Naive thymus-derived CD8-positive, alpha-beta T cell (primary cell): ENCODE measurements at regions of chr2 and their contacts with region 1.

Region 1: DNA sequence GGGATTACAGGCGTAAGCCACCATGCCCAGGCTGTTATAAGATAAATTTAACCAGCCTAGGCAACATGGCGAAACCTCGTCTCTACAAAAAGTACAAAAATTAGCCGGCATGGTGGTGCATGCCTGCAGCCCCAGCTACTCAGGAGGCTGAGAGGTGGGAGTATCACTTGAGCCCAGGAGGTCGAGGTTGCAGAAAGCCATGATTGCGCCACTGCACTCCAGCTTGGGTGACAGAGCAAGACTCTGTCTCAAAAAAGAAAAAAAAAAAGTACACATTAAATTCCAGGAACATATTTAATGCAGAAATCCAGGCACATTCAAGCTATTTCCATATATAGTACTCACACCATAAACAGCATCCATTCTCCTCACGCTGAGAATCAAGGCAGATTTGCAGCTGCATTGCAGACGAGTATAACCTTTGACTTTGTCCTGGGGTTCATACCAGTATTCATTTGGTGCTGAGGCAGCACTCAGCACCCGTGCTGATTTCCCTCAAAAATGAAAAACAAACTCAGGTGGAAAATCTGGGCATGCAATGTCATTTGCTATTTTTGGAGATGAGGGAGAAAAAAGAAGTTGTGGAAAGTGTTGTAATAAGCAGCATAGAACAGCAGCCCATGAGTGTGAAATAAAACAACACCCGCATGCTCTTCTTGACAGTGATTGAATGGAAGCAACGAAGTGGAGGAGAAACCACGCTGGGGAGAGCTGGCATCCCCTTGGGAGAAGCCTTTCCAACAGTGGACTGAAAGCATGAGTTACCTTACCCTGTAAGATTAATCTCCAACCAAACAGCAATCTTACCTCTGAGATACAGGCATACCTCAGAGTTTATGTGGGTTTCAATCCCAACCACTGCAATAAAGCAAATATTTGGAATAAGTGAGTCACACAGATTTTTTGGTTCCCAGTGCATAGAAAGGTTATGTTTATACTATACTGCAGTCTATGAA is 46.8 kb upstream of the ANXA4 start:
- DNase-seq: no peak
- ATAC-seq: no peak
- H3K4me3 Mint-ChIP-seq: peak overlapping the region in 9 of 10 donors; percentile 39 to 72 (median 55)
- H3K27ac Mint-ChIP-seq: peak overlapping the region; percentile 71 to 98 (median 88)
- H3K4me1 Mint-ChIP-seq: peaks cover 54 to 95% (median 92%) of the 10 kb centered on the region in 4 donors
- H3K27me3 Mint-ChIP-seq: no peaks in the 10 kb centered on the region

Region 2: DNA sequence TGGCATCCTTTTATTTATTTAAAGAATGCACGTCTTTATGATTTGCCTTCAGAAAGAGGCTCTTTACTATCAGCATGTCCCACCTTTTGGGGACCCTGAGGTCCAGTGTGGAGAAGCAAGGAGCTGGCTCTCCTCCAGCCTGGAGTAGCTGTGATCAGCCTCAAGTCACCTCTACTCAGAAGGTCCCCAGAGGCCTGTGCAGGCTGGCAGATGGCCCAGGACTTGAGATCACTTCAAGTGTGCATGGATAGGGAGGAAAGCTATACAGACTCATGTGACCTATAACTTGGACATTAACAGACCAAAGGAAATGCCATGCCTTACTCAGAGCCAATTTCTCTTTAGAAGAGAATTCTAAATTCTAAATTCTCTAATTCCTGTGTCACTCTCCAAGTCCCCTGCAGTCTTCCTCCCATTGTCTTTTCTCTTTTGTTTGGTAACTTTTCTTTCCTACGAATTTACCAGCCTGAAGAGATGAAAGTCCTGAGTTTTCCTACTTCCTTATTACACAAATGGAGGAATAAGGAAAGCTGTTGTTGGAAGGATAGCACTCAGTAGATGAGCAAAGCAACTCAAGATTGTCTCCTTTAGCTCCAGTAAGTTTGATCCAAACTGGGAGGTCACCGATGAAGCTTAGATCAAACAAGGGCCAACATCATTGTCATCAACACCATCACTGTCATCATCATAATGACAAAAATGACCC is 472.1 kb before region 1 on chr2:
- POLR2A ChIA-PET with region 1: no interaction called
- DNase-seq: no peak
- ATAC-seq: no peak
- H3K4me3 Mint-ChIP-seq: no peak overlapping the region
- H3K27ac Mint-ChIP-seq: no peak overlapping the region
- H3K4me1 Mint-ChIP-seq: no peaks in the 10 kb centered on the region
- H3K27me3 Mint-ChIP-seq: peaks cover 0 to 20% (median 6%) of the 10 kb centered on the region in 5 donors

Region 3: DNA sequence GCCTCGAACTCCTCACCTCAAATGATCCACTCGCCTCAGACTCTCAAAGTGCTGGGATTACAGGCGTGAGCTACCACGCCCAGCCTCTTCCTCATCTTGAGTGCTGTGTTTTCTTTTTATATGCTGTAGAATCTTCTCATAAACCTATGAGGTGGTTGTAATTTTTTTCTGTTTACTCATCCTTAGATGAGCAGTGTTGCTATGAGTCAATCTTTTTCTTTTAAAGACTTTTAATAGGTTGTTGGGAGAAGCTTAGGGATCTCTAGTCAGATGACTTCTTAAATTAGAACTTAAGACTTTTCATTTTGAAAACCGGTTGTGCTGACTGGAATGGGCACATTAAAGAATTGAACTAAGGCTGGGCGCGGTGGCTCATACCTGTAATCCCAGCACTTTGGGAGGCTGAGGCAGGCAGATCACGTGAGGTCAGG is 42.9 kb before region 1 on chr2:
- POLR2A ChIA-PET with region 1: interaction called, 214 read pairs
- DNase-seq: no peak
- ATAC-seq: no peak
- H3K4me3 Mint-ChIP-seq: peak overlapping the region in 8 of 10 donors; percentile 15 to 81 (median 53)
- H3K27ac Mint-ChIP-seq: peak overlapping the region in 8 of 10 donors; percentile 32 to 91 (median 72)
- H3K4me1 Mint-ChIP-seq: peaks cover 23 to 65% (median 59%) of the 10 kb centered on the region in 4 donors
- H3K27me3 Mint-ChIP-seq: peaks cover 0 to 6% (median 0%) of the 10 kb centered on the region in 5 donors

Region 4: GRCh38 chr2:69669666-69670065 is 25.5 kb before region 1 on chr2:
- POLR2A ChIA-PET with region 1: no interaction called
- DNase-seq: no peak
- ATAC-seq: no peak
- H3K4me3 Mint-ChIP-seq: no peak overlapping the region
- H3K27ac Mint-ChIP-seq: no peak overlapping the region
- H3K4me1 Mint-ChIP-seq: peaks cover 8 to 20% (median 16%) of the 10 kb centered on the region in 4 donors
- H3K27me3 Mint-ChIP-seq: no peaks in the 10 kb centered on the region

Region 5: DNA sequence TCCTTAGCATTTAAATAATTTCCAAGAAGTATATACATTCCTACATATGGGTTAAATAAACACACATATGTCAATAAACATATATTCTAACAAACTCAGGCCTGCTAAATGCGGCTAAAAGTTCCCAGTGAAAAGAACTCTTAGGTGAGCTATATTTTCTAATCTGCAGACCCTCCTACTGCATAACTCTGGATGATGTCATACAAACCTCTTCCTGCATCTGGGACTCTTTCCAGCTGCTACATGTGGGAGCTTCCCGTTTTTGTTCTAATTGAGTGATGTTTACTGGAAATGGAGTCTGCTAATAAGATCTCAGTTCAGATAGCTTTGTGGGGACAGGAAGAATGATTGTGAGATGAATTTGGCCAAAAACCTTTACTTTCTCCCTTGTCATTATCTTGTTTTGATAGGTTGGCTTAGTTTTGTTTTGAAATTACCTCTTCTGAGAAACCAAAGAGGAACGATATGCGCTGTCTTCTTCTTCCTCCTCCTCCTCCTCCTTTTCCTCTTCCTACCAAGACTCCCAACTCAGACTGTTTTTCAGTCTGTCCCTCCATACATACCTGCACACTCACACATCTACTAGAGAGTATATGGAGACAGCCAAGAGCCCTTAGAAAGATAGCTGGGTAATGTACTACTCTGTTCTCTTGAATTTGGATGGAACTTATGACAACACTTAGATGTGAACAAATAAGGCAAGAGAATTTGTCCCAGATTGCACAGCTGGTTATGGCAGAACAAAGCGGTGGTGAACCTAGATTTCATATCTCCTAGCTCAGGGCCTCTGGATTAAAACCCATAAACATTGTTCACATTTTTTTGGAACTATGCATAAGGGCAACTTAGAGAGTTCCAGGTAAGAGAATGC is 11.8 kb before region 1 on chr2:
- POLR2A ChIA-PET with region 1: interaction called, 24 read pairs
- DNase-seq: no peak
- ATAC-seq: peak; percentile 40 to 47
- H3K4me3 Mint-ChIP-seq: peak overlapping the region; percentile 10 to 74 (median 52)
- H3K27ac Mint-ChIP-seq: peak overlapping the region; percentile 53 to 92 (median 82)
- H3K4me1 Mint-ChIP-seq: peaks cover 39 to 71% (median 64%) of the 10 kb centered on the region in 4 donors
- H3K27me3 Mint-ChIP-seq: no peaks in the 10 kb centered on the region

Region 6: DNA sequence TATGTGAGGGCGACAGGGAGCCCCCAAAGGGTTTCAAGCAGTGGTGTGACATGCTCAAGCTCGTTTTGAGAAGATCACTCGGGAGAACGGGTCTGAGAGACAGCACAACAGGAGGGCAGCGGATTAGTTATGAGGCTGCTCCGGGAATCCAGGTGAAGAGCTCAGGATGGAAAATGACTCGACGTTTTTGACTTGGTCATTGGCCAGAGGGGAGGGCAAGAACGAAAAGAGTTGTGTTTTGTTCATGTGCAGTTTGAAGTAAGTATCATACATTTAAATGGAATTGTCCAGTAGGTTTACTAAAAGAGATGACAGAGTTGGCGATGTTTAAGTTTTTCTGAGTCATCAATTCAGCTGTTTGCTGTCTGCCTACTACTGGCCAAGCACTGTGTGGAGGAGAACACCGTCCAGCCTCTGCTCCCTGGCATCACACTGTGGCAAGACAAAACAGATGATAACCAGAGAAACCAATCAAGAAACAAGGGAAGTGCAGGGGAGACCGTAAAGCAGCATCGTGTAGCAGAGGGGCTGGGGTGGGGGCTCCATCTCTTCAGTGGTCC is 21.5 kb after region 1 on chr2:
- POLR2A ChIA-PET with region 1: interaction called, 15 read pairs
- DNase-seq: no peak
- ATAC-seq: no peak
- H3K4me3 Mint-ChIP-seq: no peak overlapping the region
- H3K27ac Mint-ChIP-seq: peak overlapping the region in 4 of 10 donors; percentile 29 to 60 (median 36)
- H3K4me1 Mint-ChIP-seq: peaks cover 11 to 23% (median 20%) of the 10 kb centered on the region in 4 donors
- H3K27me3 Mint-ChIP-seq: no peaks in the 10 kb centered on the region